A549 (cell line): ENCODE measurements at regions of chr1 and their contacts with region 1.

Region 1: GRCh38 chr1:28602536-28603439 is 10.7 kb downstream of the RAB42 start:
- DNase-seq: peak; percentile 61 to 70
- ATAC-seq: peak; percentile 85 to 88
- H3K4me3 ChIP-seq: no peak overlapping the region
- H3K27ac ChIP-seq: peak overlapping the region; percentile 9 to 78; a peak in 4 of 6 replicates
- H3K4me1 ChIP-seq: peaks cover 16% of the 10 kb centered on the region
- CTCF ChIP-seq: peak; percentile 76
- EP300 ChIP-seq: no peak
- POLR2A ChIP-seq: no peak
- RAD21 ChIP-seq: peak; percentile 81 to 82

Region 2: DNA sequence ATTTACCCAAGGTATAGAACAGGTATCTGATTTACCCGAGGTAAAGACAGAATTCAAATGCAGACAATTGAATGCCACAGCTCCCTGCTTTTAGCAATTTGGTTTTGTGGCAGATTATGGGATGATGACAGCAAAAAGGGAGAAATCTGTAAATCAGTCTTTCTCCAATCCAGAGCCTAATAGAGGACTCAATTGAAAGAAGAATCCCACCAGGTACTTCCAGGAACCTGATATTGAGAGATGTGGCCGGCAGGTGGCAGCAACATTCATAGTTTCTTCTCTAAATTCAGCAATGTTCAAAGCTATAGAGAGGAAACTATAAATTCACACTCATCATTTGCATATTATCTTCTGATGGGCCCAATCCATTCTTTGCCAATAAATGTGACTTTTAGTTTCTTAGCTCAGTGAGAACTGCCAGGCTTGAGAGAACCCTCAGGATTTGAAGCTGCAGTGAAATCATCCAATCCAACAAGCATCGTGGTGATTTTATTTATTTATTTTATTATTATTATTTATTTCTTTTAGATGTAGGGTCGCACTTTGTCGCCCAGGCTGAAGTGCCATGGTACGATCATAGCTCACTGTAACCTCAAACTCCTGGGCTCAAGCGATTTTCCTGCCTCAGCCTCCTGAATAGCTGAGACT is 243.1 kb before region 1 on chr1:
- CTCF ChIA-PET with region 1: interaction called, 33 read pairs
- POLR2A ChIA-PET with region 1: no interaction called
- DNase-seq: peak; percentile 48 to 64
- ATAC-seq: peak; percentile 80 to 81; a peak in 5 of 6 replicates
- H3K4me3 ChIP-seq: no peak overlapping the region
- H3K27ac ChIP-seq: no peak overlapping the region
- H3K4me1 ChIP-seq: no peaks in the 10 kb centered on the region; the same call in 2 of the 3 replicates
- CTCF ChIP-seq: peak; percentile 65
- EP300 ChIP-seq: no peak
- POLR2A ChIP-seq: no peak
- RAD21 ChIP-seq: peak; percentile 61 to 65

Region 3: GRCh38 chr1:28409090-28409489 is 193.7 kb before region 1 on chr1:
- CTCF ChIA-PET with region 1: interaction called, 11 read pairs
- POLR2A ChIA-PET with region 1: no interaction called
- DNase-seq: no peak
- ATAC-seq: no peak
- H3K4me3 ChIP-seq: no peak overlapping the region
- H3K27ac ChIP-seq: no peak overlapping the region
- H3K4me1 ChIP-seq: peaks cover 8% of the 10 kb centered on the region
- CTCF ChIP-seq: no peak
- EP300 ChIP-seq: no peak
- POLR2A ChIP-seq: no peak
- RAD21 ChIP-seq: no peak

Region 4: DNA sequence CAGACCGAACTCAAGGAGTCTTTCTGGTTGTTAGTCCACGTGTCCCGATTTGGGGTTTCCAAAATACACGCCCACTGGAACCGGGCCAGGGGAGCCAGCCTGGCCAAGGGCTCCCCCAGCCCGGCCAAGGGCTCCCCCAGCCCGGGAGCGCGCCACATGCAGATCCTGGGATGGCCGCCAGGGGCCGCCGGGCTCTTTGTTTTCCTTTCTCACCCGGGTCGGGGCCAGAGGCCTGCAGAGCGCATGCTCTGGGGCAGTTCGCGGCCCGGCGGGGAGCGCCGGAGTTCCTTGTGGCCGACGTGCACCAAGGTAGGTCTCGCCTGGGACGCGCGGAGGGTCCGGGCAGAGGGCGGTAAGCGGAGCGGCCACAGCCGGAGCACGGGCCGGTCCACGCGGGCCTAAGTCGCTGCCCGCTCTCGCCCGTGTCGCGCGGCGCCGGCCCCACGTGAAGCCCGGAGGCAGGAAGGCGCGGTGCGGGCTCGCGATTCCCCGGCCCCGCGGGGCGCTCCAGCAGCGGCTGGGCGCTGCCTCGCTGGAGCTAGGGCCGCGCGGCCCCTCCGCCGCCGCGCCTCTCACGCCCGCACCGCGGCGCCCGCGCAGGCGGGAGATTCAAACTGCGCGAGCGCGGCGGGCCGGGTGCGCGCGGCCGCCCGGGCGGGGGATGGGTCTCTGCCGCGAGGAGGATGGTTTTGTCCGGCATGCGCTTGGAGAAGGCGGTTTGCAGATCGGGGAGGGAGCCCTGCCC is 84.6 kb before region 1 on chr1:
- CTCF ChIA-PET with region 1: interaction called, 48 read pairs
- POLR2A ChIA-PET with region 1: interaction called, 5 read pairs
- DNase-seq: peak; percentile 73 to 86
- ATAC-seq: peak; percentile 56 to 61
- H3K4me3 ChIP-seq: peak overlapping the region; percentile 79
- H3K27ac ChIP-seq: peak overlapping the region; percentile 95 to 97
- H3K4me1 ChIP-seq: peaks cover 40% of the 10 kb centered on the region
- CTCF ChIP-seq: peak; percentile 76
- EP300 ChIP-seq: no peak
- POLR2A ChIP-seq: peak; percentile 62
- RAD21 ChIP-seq: peak; percentile 63 to 74

Region 5: DNA sequence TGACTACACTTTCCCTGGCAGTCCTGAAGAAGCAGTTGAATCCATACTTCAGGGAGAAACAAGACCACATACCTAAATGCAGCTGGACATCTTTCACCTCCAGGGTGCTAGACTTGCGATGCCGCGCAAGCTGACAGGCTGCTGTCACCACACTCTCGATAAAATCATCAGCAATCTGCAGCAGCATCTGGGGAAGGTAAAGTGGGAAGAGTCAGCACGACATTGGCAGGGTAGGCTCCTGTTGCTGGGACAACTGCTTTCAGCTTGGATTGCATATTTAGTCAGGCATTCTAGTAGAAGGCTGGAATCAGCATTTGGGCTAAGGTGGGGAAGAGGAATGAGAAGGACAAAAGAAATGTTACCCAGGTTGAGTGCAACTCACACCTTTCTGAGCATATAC is 10.4 kb after region 1 on chr1:
- CTCF ChIA-PET with region 1: interaction called, 14 read pairs
- POLR2A ChIA-PET with region 1: no interaction called
- DNase-seq: no peak
- ATAC-seq: no peak
- H3K4me3 ChIP-seq: no peak overlapping the region
- H3K27ac ChIP-seq: no peak overlapping the region
- H3K4me1 ChIP-seq: no peaks in the 10 kb centered on the region
- CTCF ChIP-seq: no peak
- EP300 ChIP-seq: no peak
- POLR2A ChIP-seq: no peak
- RAD21 ChIP-seq: no peak